ENCODE measurements at regions of chr1 and their contacts with region 1.

Region 1: GRCh38 chr1:156659994-156660751 is 17.0 kb downstream of the NES start:
- DNase-seq: peak; percentile 99
- ATAC-seq: peak; percentile 63
- H3K4me3 Mint-ChIP-seq: peak overlapping the region; percentile 35; the same call in 1 of the 2 replicates
- H3K27ac Mint-ChIP-seq: peak overlapping the region; percentile 99
- H3K4me1 Mint-ChIP-seq: peaks cover 83% of the 10 kb centered on the region
- H3K27me3 Mint-ChIP-seq: peaks cover 47% of the 10 kb centered on the region
- CTCF ChIP-seq: peak; percentile 95

Region 2: GRCh38 chr1:156641761-156642264 is 18.4 kb before region 1 on chr1 and contains the start of gene BCAN:
- CTCF ChIA-PET with region 1: interaction called, 46 read pairs
- POLR2A ChIA-PET with region 1: interaction called, 4 read pairs
- DNase-seq: peak; percentile 73
- ATAC-seq: peak; percentile 70
- H3K4me3 Mint-ChIP-seq: peak within 1 kb of the TSS; percentile 70
- H3K27ac Mint-ChIP-seq: no peak within 1 kb of the TSS
- H3K4me1 Mint-ChIP-seq: peaks cover 29% of the 10 kb centered on the region
- H3K27me3 Mint-ChIP-seq: peaks cover 92% of the 10 kb centered on the region
- CTCF ChIP-seq: no peak
- total RNA-seq, gene BCAN: 2.5 to 3.7 TPM (median 3.6 TPM) in 3 replicates

Region 3: DNA sequence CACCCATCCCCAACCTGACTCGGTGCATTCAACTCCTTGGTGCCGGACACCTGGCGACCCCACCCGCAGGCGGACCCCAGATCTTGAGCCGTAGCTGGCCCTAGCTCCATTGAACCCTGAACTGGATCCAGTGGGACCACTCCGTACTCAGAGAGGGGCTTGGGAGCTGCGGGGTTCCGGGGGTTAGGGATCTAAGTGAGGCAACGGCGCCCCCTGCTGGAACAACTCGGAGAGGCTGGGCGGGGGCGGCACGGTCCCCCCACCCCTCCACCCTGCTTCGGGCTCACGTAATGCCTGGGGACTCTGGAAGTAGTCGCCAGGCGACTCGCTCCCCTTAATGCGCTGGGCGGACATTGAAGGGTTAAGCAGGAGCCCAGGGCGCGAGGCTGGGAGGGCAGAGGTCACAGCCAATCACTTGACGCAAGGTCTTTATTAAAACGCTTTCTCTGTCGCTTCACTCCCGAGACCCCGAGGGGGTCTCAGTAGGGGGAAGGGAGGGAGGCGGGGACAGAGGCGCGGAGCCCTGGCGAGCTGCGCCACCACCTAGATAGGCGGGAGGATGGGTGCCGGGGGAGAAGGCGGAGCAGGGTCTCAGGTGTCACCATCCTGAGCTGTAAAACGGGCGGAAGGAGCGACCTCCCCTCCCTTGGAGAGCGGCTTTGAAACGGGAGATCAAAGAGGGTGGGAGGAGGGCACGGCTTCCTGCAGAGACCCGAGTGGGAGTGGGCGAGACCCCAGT is 45.9 kb after region 1 on chr1:
- CTCF ChIA-PET with region 1: interaction called, 55 read pairs
- POLR2A ChIA-PET with region 1: interaction called, 14 read pairs
- DNase-seq: peak; percentile 94
- ATAC-seq: peak; percentile 45
- H3K4me3 Mint-ChIP-seq: peak overlapping the region; percentile 84
- H3K27ac Mint-ChIP-seq: peak overlapping the region; percentile 96
- H3K4me1 Mint-ChIP-seq: peaks cover 62% of the 10 kb centered on the region
- H3K27me3 Mint-ChIP-seq: peaks cover 23% of the 10 kb centered on the region
- CTCF ChIP-seq: peak; percentile 96